ENCODE measurements at regions of chr20 and their contacts with region 1.

Region 1: DNA sequence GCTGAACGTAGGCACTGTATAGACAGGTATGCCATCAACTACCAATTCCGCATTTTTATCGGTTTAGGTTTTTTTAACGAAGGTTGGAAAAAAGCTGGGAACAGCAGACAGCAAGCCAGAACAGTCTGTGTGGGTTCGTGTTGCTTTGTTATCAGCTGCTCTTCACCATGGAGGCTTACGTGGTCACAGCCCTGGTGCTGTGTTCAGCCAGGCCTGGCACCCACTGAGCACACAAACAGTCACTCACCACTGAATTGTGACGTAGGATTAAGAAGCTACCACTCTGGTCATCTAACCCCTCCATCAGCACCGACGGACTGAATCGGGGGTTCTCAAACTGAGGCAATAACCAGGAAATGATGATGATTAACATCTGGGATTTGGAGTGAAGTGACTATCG is 13.2 kb downstream of the FAM210B start:
- DNase-seq: no peak
- H3K4me3 ChIP-seq: no peak overlapping the region
- H3K27ac ChIP-seq: no peak overlapping the region
- H3K4me1 ChIP-seq: no peaks in the 10 kb centered on the region
- H3K27me3 ChIP-seq: no peaks in the 10 kb centered on the region
- CTCF ChIP-seq: no peak
- EP300 ChIP-seq: no peak
- POLR2A ChIP-seq: no peak
- RAD21 ChIP-seq: no peak

Region 2: DNA sequence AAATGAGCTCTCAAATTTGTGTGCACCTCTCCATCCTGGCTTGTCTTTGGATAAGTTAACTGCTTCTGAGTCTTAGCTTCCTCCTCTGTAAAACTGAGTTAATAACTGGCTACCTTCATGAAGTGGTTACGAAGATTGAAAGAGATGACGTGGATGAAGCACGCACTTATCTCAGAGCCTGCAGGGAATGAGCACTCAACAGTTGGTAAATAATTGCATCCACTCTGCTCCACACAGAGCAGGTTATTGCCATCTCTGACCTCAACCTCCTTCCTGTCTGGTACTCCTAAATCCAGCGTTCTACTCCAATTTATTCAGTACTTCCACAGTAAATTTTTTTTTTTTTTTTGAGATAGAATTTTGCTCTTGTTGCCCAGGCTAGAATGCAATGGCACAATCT is 13.2 kb after region 1 on chr20:
- CTCF ChIA-PET with region 1: interaction called, 3 read pairs
- POLR2A ChIA-PET with region 1: interaction called, 11 read pairs
- DNase-seq: no peak
- H3K4me3 ChIP-seq: no peak overlapping the region
- H3K27ac ChIP-seq: no peak overlapping the region
- H3K4me1 ChIP-seq: no peaks in the 10 kb centered on the region; a peak in 1 of 7 replicates
- H3K27me3 ChIP-seq: no peaks in the 10 kb centered on the region
- CTCF ChIP-seq: no peak
- EP300 ChIP-seq: no peak
- POLR2A ChIP-seq: no peak
- RAD21 ChIP-seq: no peak

Measured in H1 (cell line).